Activated CD4-positive, alpha-beta memory T cell treated with anti-CD3 and anti-CD28 coated beads for 36 hours (primary cell): ENCODE measurements at regions of chr11 and their contacts with region 1.

Region 1: DNA sequence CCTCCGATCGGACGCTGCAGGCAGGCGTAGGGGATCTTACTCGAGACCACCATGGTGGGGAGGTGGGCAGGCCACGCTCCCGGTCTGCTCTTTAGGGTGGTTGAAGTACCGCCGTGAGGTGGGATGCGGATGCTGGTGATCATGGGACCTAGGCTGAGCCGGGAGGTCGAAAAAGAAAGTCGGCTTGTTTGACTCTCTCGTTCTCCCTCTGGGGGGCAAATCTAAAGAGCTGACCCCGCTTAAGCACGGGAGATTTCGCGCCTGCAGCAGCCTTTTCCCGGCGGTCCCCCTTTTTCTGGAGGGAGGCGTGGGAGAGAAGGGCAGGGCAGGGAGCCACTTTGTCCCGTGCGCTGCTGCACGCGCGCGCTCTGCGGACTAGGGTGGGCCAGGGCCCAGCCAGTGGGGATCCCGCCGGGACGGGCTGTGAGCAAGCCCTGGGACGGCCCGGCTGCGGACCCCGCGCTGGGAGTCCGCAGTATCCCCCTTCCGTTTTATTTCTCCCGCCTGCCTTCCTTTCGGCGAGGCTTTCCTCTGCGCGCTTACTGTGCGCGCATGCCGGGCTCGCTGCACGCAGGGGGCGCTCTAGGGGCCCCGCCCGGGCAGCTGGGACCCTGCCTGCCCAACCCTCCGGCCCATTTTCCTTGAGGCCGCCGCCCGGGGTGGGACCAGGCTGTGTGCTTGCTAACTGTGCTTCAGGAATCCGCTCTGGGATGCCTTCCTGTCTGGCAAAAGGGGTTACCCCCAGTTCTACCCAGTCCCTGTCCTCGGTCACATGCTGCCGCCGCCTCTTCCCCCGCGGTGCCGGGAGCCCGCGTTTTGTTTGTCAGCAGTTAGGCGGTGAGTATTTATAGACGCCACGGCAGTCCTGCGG is 81.0 kb downstream of the PRR5L start:
- DNase-seq: peak; percentile 82
- H3K4me3 Mint-ChIP-seq: peak overlapping the region; percentile 92
- H3K27ac Mint-ChIP-seq: peak overlapping the region; percentile 84
- H3K4me1 Mint-ChIP-seq: peaks cover 43% of the 10 kb centered on the region
- H3K27me3 Mint-ChIP-seq: peaks cover 9% of the 10 kb centered on the region

Region 2: DNA sequence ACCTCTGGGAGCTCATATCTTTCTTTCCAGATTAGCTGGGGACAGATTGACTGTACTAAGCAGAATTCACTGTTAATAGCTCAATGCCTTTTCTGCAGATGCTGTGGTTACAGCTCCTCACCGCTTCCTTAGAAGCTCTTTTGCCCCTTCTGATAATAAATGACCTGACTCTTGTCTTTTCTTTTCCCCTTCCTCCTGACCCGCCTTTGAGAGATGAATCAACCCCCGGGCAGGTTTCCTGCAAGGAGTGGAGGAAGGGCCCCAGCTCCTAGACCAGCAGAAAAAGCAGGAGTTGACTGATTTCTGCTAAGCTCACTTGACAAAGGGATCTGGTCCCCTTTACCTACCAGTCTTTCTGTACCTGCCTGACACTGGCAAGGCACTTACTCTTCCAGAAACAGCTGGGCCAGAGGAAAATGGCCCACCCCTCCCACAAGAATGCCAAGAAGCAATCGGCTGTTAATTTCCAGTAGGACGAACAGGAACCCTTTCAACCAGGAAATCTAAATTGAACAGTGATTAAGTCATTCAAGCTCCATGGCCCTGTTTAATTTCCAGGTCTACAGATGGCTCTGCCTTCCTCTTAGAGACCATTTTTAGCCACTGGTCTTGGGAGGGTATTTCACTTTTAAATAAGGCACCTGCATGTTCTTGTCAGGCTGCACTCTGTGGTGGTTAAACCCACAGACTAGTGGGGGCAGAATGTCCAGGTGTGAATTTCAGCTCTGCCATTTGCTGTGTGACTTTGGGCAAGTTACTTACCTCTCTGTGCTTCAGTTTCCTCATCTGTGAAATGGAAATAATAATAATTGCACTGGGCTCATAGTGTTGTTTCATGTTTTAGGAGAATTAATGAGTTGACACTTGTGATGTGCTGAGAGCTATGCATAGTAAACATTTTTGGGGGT is 13.5 kb before region 1 on chr11:
- CTCF ChIA-PET with region 1: interaction called, 21 read pairs
- POLR2A ChIA-PET with region 1: interaction called, 5 read pairs
- intact Hi-C with region 1: loop called (anchors 1 kb)
- DNase-seq: no peak
- H3K4me3 Mint-ChIP-seq: no peak overlapping the region
- H3K27ac Mint-ChIP-seq: peak overlapping the region; percentile 52
- H3K4me1 Mint-ChIP-seq: peaks cover 51% of the 10 kb centered on the region
- H3K27me3 Mint-ChIP-seq: peaks cover 2% of the 10 kb centered on the region

Region 3: GRCh38 chr11:36400766-36401455 is 23.8 kb after region 1 on chr11:
- CTCF ChIA-PET with region 1: interaction called, 11 read pairs
- POLR2A ChIA-PET with region 1: interaction called, 3 read pairs
- intact Hi-C with region 1: no loop called
- DNase-seq: no peak
- H3K4me3 Mint-ChIP-seq: peak overlapping the region; percentile 60
- H3K27ac Mint-ChIP-seq: peak overlapping the region; percentile 78
- H3K4me1 Mint-ChIP-seq: peaks cover 49% of the 10 kb centered on the region
- H3K27me3 Mint-ChIP-seq: no peaks in the 10 kb centered on the region

Region 4: GRCh38 chr11:36421546-36422155 is 44.5 kb after region 1 on chr11:
- CTCF ChIA-PET with region 1: interaction called, 32 read pairs
- POLR2A ChIA-PET with region 1: interaction called, 4 read pairs
- intact Hi-C with region 1: loop called (anchors 2 kb)
- DNase-seq: no peak
- H3K4me3 Mint-ChIP-seq: peak overlapping the region; percentile 31
- H3K27ac Mint-ChIP-seq: peak overlapping the region; percentile 85
- H3K4me1 Mint-ChIP-seq: peaks cover 79% of the 10 kb centered on the region
- H3K27me3 Mint-ChIP-seq: no peaks in the 10 kb centered on the region

Region 5: GRCh38 chr11:36478700-36479329 is 101.7 kb after region 1 on chr11:
- CTCF ChIA-PET with region 1: interaction called, 26 read pairs
- POLR2A ChIA-PET with region 1: no interaction called
- intact Hi-C with region 1: no loop called
- DNase-seq: peak; percentile 38
- H3K4me3 Mint-ChIP-seq: no peak overlapping the region
- H3K27ac Mint-ChIP-seq: no peak overlapping the region
- H3K4me1 Mint-ChIP-seq: peaks cover 12% of the 10 kb centered on the region
- H3K27me3 Mint-ChIP-seq: no peaks in the 10 kb centered on the region

Region 6: GRCh38 chr11:36509694-36510566 is 132.8 kb after region 1 on chr11 and contains the start of gene TRAF6:
- CTCF ChIA-PET with region 1: interaction called, 4 read pairs
- POLR2A ChIA-PET with region 1: no interaction called
- intact Hi-C with region 1: loop called (anchors 5 kb)
- DNase-seq: peak; percentile 92
- H3K4me3 Mint-ChIP-seq: peak within 1 kb of the TSS; percentile 94
- H3K27ac Mint-ChIP-seq: peak within 1 kb of the TSS; percentile 86
- H3K4me1 Mint-ChIP-seq: peaks cover 27% of the 10 kb centered on the region
- H3K27me3 Mint-ChIP-seq: peaks cover 5% of the 10 kb centered on the region
- total RNA-seq, gene TRAF6: 12.0 to 12.1 TPM